ENCODE measurements at regions of chr11 and their contacts with region 1.

Region 1: DNA sequence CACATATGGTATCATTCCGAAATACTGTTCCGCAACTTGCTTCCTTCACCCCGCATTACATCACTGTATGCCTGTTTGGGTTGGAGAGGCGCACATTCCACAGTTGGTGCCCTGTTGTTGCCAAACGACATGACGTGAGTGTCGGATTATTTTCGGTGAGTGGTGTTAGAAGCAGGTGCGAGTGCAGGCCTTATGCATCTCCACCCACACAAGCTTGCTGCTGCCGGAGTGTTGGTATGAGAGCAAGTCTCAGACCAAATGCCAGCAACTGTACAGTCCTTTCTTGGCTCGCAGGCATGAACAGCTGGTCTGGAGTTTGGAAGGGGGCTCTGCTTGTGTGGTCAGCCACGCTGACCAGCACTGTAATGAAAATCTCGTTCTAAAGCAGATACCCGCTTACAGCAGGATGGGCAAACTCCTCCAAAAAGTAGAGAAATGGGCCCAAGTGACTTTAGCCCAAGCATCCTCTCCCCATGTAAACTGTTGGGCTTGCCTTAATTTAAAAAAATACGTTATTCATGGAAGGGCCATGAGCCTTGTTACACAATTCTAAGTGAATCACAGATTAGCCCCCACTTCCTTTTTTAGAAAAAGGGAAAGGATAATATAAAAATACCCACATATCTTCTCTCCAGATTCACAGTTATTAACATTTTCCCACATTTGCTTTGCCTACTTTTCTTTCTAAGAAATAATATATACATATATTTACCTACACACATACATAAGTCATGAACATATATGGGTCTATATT is 48.7 kb upstream of the OR9Q1 start:
- DNase-seq: no peak
- ATAC-seq: peak in 3 of 4 donors; percentile 48 to 62 (median 56)
- H3K4me3 ChIP-seq: no peak overlapping the region
- H3K27ac ChIP-seq: no peak overlapping the region
- H3K4me1 ChIP-seq: no peaks in the 10 kb centered on the region
- H3K27me3 ChIP-seq: no peaks in the 10 kb centered on the region
- CTCF ChIP-seq: no peak

Region 2: GRCh38 chr11:58024601-58025091 is 49.6 kb after region 1 on chr11:
- intact Hi-C with region 1: loop called in 1 of 2 experiments (anchors 2 kb)
- DNase-seq: peak; percentile 70 to 82
- ATAC-seq: peak; percentile 75 to 94 (median 86)
- H3K4me3 ChIP-seq: no peak overlapping the region
- H3K27ac ChIP-seq: peak overlapping the region; percentile 61
- H3K4me1 ChIP-seq: peaks cover 14% of the 10 kb centered on the region
- H3K27me3 ChIP-seq: no peaks in the 10 kb centered on the region
- CTCF ChIP-seq: no peak

Measured in psoas muscle (tissue), 8 donors.